GM13976 (cell line): ENCODE measurements at regions of chr4 and their contacts with region 1.

Region 1: GRCh38 chr4:107906458-107907100 is 24.8 kb upstream of the CYP2U1 start:
- DNase-seq: no peak
- CTCF ChIP-seq: no peak

Region 2: DNA sequence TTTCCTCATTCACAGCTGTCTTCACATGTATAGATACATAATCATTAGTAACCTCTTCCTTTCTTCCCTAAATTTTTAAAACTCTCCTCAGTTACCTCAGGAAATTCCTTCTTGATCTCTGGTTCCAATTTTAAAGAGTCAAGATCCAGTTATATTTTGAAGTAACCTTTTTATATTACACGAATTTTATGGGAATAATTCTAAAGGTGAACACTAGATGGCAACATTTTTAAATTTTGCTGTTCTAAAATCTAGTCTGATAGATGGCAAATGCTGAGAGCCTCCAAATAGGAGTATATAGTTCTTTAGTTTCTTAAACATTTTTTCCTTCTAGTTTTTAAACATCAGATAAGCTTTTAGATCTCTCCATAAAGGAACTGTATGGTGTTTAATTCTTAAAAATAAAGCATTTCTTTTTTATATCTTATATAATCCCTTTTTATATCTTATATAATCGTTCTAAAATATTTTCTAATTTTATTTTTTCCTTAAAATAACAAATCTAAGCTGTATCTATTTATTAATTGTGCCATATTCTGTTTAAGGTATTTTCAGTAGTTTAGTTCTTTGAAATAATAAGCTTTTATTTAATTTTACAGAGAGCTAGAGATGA is 148.6 kb before region 1 on chr4:
- in situ Hi-C with region 1: loop called (anchors 5 kb)
- DNase-seq: no peak
- CTCF ChIP-seq: no peak